Body of pancreas (tissue), 4 donors: ENCODE measurements at regions of chr1 and their contacts with region 1.

Region 1: DNA sequence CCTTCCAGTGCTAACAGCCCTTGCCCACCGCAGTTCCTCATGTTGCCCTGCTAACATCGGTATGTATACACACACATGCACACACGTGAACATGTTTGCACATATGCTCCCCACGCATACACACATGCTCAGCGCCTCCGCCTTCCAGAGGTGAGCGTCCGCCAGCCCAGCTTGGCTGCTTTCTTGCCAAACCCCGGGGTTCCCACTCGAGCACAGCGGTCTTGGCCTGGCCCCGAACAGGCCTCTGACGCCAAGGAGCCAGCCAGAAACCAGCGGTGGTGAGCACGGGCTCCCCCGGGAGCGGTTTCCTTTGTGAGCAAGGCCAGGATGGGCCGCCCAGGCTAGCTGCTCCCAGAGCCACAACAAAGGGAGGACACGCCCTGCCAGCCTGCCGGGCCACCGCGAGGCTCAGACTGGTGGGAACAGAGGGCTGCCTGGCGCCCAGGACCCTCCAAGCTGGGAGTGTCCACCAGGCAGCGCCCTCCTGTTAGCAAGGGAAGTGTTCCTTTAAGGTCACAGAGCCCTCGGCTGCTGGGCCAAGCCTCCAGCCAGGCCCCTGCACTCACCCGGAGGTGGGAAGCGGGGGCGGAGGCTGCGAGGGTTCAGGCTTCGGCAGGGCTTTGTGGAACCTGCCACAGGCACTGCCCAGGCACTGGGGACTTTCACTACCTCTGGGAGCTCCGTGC is 65.4 kb downstream of the ALPL start:
- DNase-seq: no peak
- ATAC-seq: peak; percentile 47
- H3K4me3 ChIP-seq: no peak overlapping the region
- H3K27ac ChIP-seq: peak overlapping the region in 2 of 4 donors; percentile 14 to 29
- H3K4me1 ChIP-seq: peaks cover 4% of the 10 kb centered on the region
- H3K27me3 ChIP-seq: no peaks in the 10 kb centered on the region
- CTCF ChIP-seq: no peak
- POLR2A ChIP-seq: no peak

Region 2: GRCh38 chr1:20558191-20558590 is 1016.4 kb before region 1 on chr1:
- intact Hi-C with region 1: no loop called
- DNase-seq: no peak
- ATAC-seq: no peak
- H3K4me3 ChIP-seq: no peak overlapping the region
- H3K27ac ChIP-seq: no peak overlapping the region
- H3K4me1 ChIP-seq: peaks cover 8% of the 10 kb centered on the region
- H3K27me3 ChIP-seq: peaks cover 0 to 9% of the 10 kb centered on the region in 2 donors
- CTCF ChIP-seq: no peak
- POLR2A ChIP-seq: no peak

Region 3: GRCh38 chr1:21050031-21050430 is 524.6 kb before region 1 on chr1:
- intact Hi-C with region 1: no loop called
- DNase-seq: no peak
- ATAC-seq: no peak
- H3K4me3 ChIP-seq: no peak overlapping the region
- H3K27ac ChIP-seq: no peak overlapping the region
- H3K4me1 ChIP-seq: no peaks in the 10 kb centered on the region
- H3K27me3 ChIP-seq: no peaks in the 10 kb centered on the region
- CTCF ChIP-seq: no peak
- POLR2A ChIP-seq: no peak

Region 4: DNA sequence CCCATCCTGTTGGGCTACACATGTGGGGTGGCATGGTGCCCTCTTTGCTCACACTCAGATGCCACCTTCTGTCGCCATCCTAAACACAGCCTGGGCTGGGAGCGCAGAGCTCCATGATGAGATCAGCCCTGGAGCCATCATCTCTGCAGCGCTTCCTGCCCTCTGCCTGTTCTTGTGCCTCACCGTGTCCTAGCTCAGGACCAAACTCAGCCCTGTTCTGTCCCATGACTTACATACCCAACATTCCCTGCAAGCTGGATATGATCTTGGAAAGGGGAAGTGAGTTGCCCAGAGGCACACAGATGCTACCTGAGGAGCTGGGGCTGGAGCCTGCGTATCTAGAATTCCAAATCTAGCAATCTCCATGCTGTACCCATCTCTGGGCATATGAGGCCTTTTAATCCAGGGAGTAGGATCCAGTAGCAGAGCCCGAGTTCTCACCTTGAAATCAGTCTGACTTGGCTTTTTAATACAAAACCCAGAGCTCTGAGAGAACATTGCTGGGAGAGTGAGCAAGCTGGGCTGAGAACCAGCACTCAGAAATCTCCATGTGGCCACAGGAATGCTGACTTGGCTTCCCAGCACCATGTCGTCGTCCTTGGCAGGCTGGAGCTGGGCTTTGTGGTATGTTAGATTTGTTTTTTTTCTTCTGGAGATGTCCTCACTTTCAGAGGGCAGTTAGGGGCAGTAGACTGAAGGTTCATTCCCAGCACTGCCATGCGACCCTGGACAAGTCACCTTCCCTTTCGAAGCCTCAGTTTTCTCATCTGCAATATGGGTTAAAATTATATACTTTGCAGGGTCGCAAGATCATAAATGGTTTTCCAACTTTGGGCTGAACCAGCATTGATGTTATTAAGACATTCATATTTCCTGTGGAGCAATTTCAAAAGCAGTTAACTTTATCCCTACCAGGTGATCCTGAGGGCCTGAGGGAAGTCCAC is 62.8 kb before region 1 on chr1:
- intact Hi-C with region 1: loop called (anchors 5 kb)
- DNase-seq: peak in 3 of 4 donors; percentile 34 to 63 (median 52)
- ATAC-seq: peak; percentile 33
- H3K4me3 ChIP-seq: no peak overlapping the region
- H3K27ac ChIP-seq: no peak overlapping the region
- H3K4me1 ChIP-seq: peaks cover 12% of the 10 kb centered on the region
- H3K27me3 ChIP-seq: peaks cover 0 to 11% of the 10 kb centered on the region in 2 donors
- CTCF ChIP-seq: no peak
- POLR2A ChIP-seq: no peak